A673 (cell line): ENCODE measurements at regions of chr22 and their contacts with region 1.

Region 1: GRCh38 chr22:49046546-49047361 is 780.9 kb downstream of the BRD1 start:
- DNase-seq: peak; percentile 87
- H3K4me3 ChIP-seq: no peak overlapping the region
- H3K27ac ChIP-seq: peak overlapping the region; percentile 53
- H3K4me1 ChIP-seq: peaks cover 29% of the 10 kb centered on the region
- H3K27me3 ChIP-seq: no peaks in the 10 kb centered on the region
- CTCF ChIP-seq: peak; percentile 88

Region 2: DNA sequence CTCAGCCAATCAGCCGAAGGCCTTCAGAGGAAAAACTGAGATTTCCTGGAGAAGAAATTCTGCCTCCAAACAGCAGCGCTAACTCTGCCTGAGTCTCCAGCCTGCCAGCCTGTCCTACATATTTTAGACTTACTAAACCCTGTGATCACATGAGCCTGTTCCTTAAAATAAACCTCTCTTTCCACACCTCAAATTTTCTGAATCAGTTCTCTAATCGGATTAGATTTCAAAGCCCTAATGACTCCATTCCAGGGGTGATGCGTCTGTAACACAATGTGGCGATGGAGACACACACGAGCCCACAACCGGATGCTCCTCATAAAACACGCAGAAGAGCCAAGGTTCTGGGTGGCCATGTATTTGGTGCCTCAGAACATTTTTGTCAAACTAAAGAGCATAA is 590.3 kb before region 1 on chr22:
- CTCF ChIA-PET with region 1: no interaction called
- POLR2A ChIA-PET with region 1: no interaction called
- intact Hi-C with region 1: no loop called
- DNase-seq: peak; percentile 40
- H3K4me3 ChIP-seq: no peak overlapping the region
- H3K27ac ChIP-seq: no peak overlapping the region
- H3K4me1 ChIP-seq: no peaks in the 10 kb centered on the region
- H3K27me3 ChIP-seq: no peaks in the 10 kb centered on the region
- CTCF ChIP-seq: no peak

Region 3: DNA sequence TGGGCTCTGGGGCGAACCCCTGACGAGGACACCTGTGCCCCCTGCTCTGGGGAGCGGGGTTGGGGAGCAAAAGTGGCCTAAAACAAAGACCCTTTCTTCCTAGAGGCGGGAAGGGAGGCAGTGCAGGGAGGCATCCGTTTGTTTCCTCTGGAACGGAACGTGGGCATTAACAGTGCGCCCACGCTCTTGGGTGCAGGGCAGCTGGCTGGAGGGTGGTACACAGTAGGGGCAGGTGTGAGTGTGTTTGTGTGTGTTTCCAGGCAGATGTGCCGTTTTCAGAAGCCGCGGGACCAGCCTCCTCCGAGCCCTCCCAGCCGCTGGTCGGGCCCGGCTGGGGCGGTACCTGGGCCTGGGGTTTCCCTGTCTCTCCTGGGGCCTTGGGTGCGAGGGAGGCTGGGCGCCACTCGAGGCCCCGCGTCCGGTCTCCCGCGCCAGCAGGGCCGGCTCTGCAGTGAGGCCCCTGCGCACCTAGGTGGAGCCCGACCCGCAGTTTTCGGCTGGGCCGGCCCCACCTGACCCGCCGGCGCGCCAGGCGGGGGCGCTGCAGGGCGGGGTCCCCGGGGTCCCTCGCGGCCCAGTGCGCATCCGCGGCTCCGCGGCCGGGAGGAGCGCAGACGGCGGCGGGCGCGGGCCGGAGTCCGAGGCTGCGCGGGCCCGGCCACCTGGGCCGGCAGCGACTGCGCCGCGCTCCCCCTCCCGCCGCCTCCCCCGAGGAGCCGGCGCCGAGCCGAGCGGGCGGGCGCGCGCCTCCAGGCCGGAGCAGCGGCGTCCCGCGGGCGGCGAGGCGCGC is 471.8 kb before region 1 on chr22:
- CTCF ChIA-PET with region 1: no interaction called
- POLR2A ChIA-PET with region 1: no interaction called
- intact Hi-C with region 1: loop called (anchors 10 kb)
- DNase-seq: peak; percentile 87
- H3K4me3 ChIP-seq: peak overlapping the region; percentile 61
- H3K27ac ChIP-seq: no peak overlapping the region
- H3K4me1 ChIP-seq: peaks cover 10% of the 10 kb centered on the region
- H3K27me3 ChIP-seq: no peaks in the 10 kb centered on the region
- CTCF ChIP-seq: peak; percentile 61

Region 4: GRCh38 chr22:48719978-48720661 is 326.6 kb before region 1 on chr22:
- CTCF ChIA-PET with region 1: no interaction called
- POLR2A ChIA-PET with region 1: no interaction called
- intact Hi-C with region 1: no loop called
- DNase-seq: peak; percentile 24
- H3K4me3 ChIP-seq: no peak overlapping the region
- H3K27ac ChIP-seq: no peak overlapping the region
- H3K4me1 ChIP-seq: no peaks in the 10 kb centered on the region
- H3K27me3 ChIP-seq: no peaks in the 10 kb centered on the region
- CTCF ChIP-seq: peak; percentile 55

Region 5: DNA sequence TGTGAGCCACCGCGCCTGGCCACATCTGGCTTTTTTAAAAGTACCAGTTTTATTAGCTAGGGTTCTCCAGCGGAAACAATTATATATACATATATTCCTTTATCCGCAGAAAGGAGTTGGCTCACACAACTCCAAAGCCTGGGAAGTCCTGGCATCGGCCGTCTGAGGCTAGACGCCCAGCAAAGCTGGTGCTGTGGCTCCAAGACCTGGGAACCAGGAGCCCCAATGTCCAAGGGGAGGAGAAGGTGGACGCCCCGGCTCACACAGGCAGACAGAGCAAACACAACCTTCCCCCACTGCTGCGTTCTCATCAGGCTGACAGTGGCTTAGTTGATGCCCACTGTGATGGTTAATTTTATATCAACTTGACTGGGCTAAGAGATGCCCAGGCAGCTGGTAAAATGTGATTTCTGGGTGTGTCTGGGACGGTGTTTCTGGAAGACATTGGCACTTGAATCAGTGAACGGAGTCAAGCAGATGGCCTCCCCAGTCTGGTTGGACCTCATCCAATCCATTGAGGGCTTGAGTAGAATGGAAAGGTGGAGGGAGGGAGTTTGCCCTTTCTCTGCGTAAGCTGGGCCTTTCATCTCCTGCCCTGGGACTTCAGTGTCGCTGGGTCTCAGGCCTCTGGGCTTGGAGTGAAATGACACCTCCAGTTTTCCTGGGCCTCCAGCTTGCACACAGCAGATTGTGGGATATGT is 123.4 kb before region 1 on chr22:
- CTCF ChIA-PET with region 1: no interaction called
- POLR2A ChIA-PET with region 1: no interaction called
- intact Hi-C with region 1: no loop called
- DNase-seq: no peak
- H3K4me3 ChIP-seq: no peak overlapping the region
- H3K27ac ChIP-seq: no peak overlapping the region
- H3K4me1 ChIP-seq: no peaks in the 10 kb centered on the region
- H3K27me3 ChIP-seq: no peaks in the 10 kb centered on the region
- CTCF ChIP-seq: no peak

Region 6: DNA sequence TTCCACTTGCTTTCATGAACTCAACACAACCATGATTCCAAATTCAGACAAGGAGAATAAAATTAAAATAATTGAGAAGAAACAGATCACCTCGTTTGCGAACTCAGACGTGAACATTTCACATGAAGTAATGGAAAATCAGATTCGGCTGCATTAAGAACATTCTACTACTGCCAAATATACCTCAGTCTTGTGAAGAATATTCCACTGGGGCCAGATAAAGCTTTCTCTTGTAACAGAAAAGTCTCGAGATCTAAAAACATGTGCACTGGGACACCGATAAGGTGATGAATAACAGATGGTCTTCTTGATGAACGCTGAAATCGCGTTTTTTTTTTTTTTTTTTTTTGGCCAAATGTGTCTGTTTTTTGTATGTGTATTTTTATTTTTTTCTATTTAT is 19.9 kb after region 1 on chr22:
- CTCF ChIA-PET with region 1: no interaction called
- POLR2A ChIA-PET with region 1: interaction called, 20 read pairs
- intact Hi-C with region 1: no loop called
- DNase-seq: no peak
- H3K4me3 ChIP-seq: no peak overlapping the region
- H3K27ac ChIP-seq: no peak overlapping the region
- H3K4me1 ChIP-seq: peaks cover 10% of the 10 kb centered on the region
- H3K27me3 ChIP-seq: no peaks in the 10 kb centered on the region
- CTCF ChIP-seq: no peak

Region 7: GRCh38 chr22:49305214-49305909 is 258.6 kb after region 1 on chr22:
- CTCF ChIA-PET with region 1: interaction called, 42 read pairs
- POLR2A ChIA-PET with region 1: no interaction called
- intact Hi-C with region 1: loop called (anchors 1 kb)
- DNase-seq: peak; percentile 64
- H3K4me3 ChIP-seq: no peak overlapping the region
- H3K27ac ChIP-seq: peak overlapping the region; percentile 63
- H3K4me1 ChIP-seq: peaks cover 9% of the 10 kb centered on the region
- H3K27me3 ChIP-seq: no peaks in the 10 kb centered on the region
- CTCF ChIP-seq: peak; percentile 97

Region 8: GRCh38 chr22:49632199-49633009 is 585.6 kb after region 1 on chr22:
- CTCF ChIA-PET with region 1: interaction called, 3 read pairs
- POLR2A ChIA-PET with region 1: no interaction called
- intact Hi-C with region 1: loop called (anchors 5 kb)
- DNase-seq: peak; percentile 89
- H3K4me3 ChIP-seq: peak overlapping the region; percentile 17
- H3K27ac ChIP-seq: peak overlapping the region; percentile 73
- H3K4me1 ChIP-seq: peaks cover 31% of the 10 kb centered on the region
- H3K27me3 ChIP-seq: no peaks in the 10 kb centered on the region
- CTCF ChIP-seq: peak; percentile 98